Pancreas (tissue), 10 donors: ENCODE measurements at regions of chr15 and their contacts with region 1.

Region 1: DNA sequence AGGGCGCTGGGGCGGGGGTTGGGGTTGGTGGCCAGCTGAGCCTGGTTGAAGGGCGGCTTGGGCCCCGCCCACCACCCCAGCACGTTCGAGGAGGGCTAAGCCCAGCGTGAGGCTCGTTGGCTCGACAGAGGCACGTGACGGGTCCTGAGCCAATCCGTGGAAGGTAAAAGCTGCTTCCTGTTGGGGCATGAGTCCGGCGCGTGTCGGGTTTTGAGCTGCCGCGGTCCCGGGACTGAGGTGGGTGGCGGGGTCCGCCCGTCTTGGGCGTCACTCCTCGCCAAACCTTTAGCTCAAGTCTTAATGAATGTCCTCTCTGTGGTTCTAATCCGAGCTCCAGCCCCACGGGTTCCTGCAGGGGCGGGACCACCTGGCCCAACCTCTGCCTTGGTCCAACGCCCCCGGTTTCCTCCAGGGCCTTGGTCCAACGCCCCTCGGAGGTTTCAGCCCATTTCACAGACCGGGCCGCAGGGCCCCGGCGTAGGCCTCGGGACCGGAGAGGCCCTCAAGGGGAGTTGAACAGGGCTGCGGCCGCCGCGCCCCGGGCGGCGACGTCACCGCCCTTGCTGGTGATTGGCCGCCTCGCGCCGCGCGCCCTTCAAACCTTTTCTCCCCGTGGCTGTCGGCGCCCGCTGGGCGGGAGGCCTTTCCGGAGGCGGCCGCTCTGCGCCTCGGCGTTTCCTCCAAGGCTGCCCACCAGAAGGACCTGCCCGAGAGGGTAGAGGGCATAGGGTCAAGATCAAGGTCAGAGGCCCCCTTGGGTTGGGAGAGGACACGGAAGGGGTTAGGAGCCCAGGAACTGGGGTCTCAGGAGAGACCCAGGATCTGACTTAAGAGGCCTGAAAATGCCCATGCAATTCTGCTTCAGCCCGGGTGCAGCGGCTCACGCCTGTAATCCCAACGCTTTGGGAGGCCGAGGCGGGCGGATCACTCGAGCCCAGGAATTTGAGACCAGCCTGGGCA is at the start of gene RCCD1:
- DNase-seq: peak; percentile 90 to 98 (median 96)
- ATAC-seq: peak; percentile 87 to 94 (median 90)
- H3K4me3 ChIP-seq: peak within 1 kb of the TSS; percentile 53 to 95 (median 74)
- H3K27ac ChIP-seq: peak within 1 kb of the TSS; percentile 92 to 96 (median 94)
- H3K4me1 ChIP-seq: peaks cover 8 to 17% (median 8%) of the 10 kb centered on the region in 3 donors
- H3K27me3 ChIP-seq: no peaks in the 10 kb centered on the region
- CTCF ChIP-seq: no peak
- total RNA-seq, gene RCCD1: 6.6 to 12.2 (median 7.8) TPM

Region 2: DNA sequence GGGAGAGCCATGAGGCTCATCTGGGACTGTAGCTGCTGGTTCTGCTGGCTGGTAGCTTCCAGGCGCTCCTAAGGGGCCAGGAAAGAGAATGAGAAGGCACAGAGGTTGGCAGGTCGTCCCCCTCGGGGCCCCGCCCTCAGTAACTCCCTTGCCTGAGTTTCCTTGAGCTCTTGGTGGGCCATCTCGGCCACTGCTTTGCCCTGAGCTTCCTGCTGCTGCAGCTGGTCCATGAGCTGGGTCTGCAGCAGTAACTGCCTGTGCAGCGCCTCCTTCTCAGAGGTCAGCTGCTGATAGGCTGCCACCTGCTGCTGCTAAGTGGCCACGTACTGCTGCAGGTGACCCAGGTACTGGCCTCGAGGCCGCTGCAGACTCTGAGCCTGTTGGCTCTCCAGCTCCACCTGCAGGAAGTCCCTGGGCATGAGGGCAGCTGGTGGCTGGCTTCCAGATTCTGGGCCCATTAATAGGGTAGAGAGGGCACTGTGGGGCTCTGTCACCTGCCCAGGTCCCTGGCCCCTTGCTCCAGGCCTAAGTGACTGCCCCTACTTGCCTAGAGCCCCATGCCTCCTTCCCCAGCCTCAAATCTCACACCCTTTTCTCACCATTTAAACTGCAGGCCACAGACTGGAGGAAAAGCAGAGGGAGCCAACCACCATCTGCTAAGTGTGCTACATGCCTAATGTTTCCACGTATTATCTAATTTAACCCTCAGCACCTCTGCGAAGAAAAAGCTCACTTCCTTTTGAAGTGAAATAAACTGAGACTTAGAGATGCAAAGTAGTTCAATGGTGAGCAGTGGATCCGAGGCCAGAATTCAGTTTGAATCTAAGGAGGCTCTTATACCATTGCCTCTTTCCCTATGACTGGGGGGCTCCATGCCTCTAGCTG is 78.2 kb after region 1 on chr15:
- intact Hi-C with region 1: loop called in 2 of 3 experiments (anchors 5 kb)
- DNase-seq: peak; percentile 90 to 98 (median 94)
- ATAC-seq: peak; percentile 89 to 96 (median 94)
- H3K4me3 ChIP-seq: peak overlapping the region; percentile 34 to 52 (median 39)
- H3K27ac ChIP-seq: peak overlapping the region; percentile 58 to 73 (median 67)
- H3K4me1 ChIP-seq: no peaks in the 10 kb centered on the region
- H3K27me3 ChIP-seq: no peaks in the 10 kb centered on the region
- CTCF ChIP-seq: peak; percentile 81 to 93 (median 87)

Region 3: GRCh38 chr15:91039996-91040395 is 85.0 kb after region 1 on chr15:
- intact Hi-C with region 1: loop called in 1 of 3 experiments (anchors 5 kb)
- DNase-seq: no peak
- ATAC-seq: no peak
- H3K4me3 ChIP-seq: no peak overlapping the region
- H3K27ac ChIP-seq: no peak overlapping the region
- H3K4me1 ChIP-seq: no peaks in the 10 kb centered on the region
- H3K27me3 ChIP-seq: no peaks in the 10 kb centered on the region
- CTCF ChIP-seq: no peak

Region 4: DNA sequence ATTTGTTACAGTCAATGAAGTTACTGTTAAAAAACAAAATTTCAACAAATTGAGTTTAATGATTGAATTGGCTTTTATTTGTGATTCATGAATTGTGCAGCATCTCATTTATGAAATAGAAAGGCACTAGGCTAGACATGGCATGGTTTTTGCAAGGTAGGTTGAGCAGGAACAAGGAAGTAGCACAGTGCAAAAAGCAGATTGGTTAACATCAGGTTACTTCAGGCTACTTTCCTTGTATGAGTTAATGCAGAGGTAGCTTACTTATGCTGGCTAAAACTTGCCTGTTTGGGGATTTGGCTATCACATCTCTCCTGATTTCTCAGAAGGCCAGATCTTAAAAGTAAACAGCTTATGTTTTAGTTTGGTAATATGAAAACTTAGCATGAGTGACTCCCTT is 122.0 kb after region 1 on chr15:
- intact Hi-C with region 1: no loop called
- DNase-seq: no peak
- ATAC-seq: no peak
- H3K4me3 ChIP-seq: no peak overlapping the region
- H3K27ac ChIP-seq: no peak overlapping the region
- H3K4me1 ChIP-seq: no peaks in the 10 kb centered on the region
- H3K27me3 ChIP-seq: peaks cover 0 to 4% (median 0%) of the 10 kb centered on the region in 4 donors
- CTCF ChIP-seq: no peak

Region 5: DNA sequence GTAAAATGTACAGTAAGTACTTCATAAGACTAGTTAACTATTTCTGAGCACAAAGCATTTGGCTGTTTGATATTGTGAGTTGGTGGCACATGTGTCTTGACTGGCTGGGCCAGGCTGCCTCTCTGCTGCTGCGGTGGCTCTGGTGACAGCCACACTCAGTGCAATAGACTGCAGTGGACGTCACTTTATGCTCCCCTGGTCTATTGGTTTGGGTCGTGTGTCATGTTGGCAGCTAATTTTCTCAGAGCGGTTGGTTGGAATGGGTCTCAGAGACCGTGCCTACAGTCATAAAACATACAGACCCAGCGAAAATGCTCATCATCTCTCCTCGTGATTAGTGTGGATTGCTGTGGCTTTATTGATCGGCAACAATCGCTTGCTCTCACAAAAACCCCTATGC is 216.3 kb after region 1 on chr15:
- intact Hi-C with region 1: no loop called
- DNase-seq: no peak
- ATAC-seq: no peak
- H3K4me3 ChIP-seq: no peak overlapping the region
- H3K27ac ChIP-seq: no peak overlapping the region
- H3K4me1 ChIP-seq: no peaks in the 10 kb centered on the region
- H3K27me3 ChIP-seq: no peaks in the 10 kb centered on the region
- CTCF ChIP-seq: no peak